ENCODE measurements at regions of chr10 and their contacts with region 1.

Region 1: GRCh38 chr10:3776796-3777571 is 8.0 kb downstream of the KLF6 start:
- DNase-seq: peak; percentile 69
- H3K4me3 Mint-ChIP-seq: peak overlapping the region; percentile 65
- H3K27ac Mint-ChIP-seq: peak overlapping the region; percentile 99
- H3K4me1 Mint-ChIP-seq: peaks cover 47% of the 10 kb centered on the region
- H3K27me3 Mint-ChIP-seq: no peaks in the 10 kb centered on the region
- CTCF ChIP-seq: no peak

Region 2: DNA sequence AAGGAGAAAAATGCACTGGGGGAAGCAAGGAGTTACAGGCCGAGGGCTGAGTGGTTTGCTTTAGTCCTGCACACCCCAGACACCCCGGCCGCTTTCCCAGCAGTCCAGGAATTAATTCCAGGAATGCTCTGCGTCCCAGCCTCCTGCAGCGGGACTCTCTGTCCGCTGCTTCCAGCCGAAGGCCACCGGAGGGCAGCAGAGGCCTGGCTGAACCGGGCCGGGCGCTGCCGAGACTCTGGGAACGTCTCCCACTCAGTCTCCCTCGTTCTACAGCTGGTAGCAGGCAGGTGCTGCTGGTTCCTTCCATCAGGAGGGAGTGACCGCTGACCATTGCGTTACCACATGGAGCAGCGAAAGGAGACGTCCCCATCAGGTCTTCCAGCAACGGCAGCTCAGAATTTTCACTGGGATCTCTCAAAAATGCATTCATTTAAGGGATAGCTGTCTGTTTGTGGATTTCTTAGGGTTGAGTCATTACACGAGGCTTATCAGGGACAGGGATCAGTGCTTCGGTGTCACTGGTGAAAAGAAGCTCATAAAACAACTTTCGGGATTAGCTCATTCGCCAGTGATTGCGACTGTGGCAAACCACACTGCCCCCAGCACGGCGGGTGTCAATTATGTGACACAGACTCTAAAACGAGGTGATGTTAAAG is 579.5 kb before region 1 on chr10:
- CTCF ChIA-PET with region 1: no interaction called
- intact Hi-C with region 1: loop called (anchors 5 kb)
- DNase-seq: peak; percentile 87
- H3K4me3 Mint-ChIP-seq: peak overlapping the region; percentile 68
- H3K27ac Mint-ChIP-seq: peak overlapping the region; percentile 49
- H3K4me1 Mint-ChIP-seq: peaks cover 17% of the 10 kb centered on the region
- H3K27me3 Mint-ChIP-seq: peaks cover 24% of the 10 kb centered on the region
- CTCF ChIP-seq: peak; percentile 85

Region 3: GRCh38 chr10:3239066-3239919 is 537.7 kb before region 1 on chr10:
- CTCF ChIA-PET with region 1: no interaction called
- intact Hi-C with region 1: loop called (anchors 5 kb)
- DNase-seq: peak; percentile 85
- H3K4me3 Mint-ChIP-seq: no peak overlapping the region
- H3K27ac Mint-ChIP-seq: no peak overlapping the region
- H3K4me1 Mint-ChIP-seq: peaks cover 9% of the 10 kb centered on the region
- H3K27me3 Mint-ChIP-seq: no peaks in the 10 kb centered on the region
- CTCF ChIP-seq: peak; percentile 73

Region 4: DNA sequence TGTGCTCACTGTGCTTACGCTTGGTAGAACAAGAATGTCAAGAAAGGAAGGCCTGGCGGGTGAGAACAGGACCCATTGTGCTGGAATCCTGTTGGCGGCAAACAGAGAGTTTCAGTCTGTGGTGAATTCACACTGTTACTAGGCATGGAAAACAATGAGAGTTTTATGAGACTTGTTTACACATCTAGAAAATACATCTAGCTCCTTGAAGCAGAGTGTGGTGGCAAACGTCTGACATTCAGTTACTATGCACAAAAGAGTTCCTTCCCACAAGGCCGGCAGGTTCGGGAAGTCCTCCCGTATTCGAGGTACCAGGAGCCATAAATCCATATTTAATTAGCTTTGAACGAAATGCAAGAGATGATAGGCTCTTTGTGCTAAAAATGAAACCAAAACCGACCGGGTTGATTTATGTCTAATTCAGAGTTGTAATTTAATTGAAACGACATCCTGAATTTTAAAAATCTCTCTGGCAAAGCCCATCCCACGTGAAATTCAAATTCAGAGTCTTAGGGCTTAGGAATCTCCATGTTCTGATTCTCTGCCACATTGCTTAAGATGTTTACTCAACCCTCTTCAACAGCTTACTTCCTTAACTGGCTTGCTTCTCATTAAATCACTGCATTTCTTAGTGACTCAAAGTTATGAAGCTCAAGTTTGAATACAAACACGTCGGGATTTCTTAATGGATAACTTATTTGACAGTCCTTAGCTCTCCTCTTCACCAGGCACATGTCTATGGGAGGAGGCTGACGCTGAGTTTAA is 304.5 kb before region 1 on chr10:
- CTCF ChIA-PET with region 1: interaction called, 5 read pairs
- intact Hi-C with region 1: loop called (anchors 2 kb)
- DNase-seq: peak; percentile 60
- H3K4me3 Mint-ChIP-seq: peak overlapping the region; percentile 44
- H3K27ac Mint-ChIP-seq: peak overlapping the region; percentile 94
- H3K4me1 Mint-ChIP-seq: peaks cover 83% of the 10 kb centered on the region
- H3K27me3 Mint-ChIP-seq: no peaks in the 10 kb centered on the region
- CTCF ChIP-seq: no peak

Region 5: GRCh38 chr10:3636356-3637181 is 140.4 kb before region 1 on chr10:
- CTCF ChIA-PET with region 1: no interaction called
- intact Hi-C with region 1: loop called (anchors 5 kb)
- DNase-seq: peak; percentile 10
- H3K4me3 Mint-ChIP-seq: peak overlapping the region; percentile 59
- H3K27ac Mint-ChIP-seq: peak overlapping the region; percentile 89
- H3K4me1 Mint-ChIP-seq: peaks cover 54% of the 10 kb centered on the region
- H3K27me3 Mint-ChIP-seq: no peaks in the 10 kb centered on the region
- CTCF ChIP-seq: no peak

Measured in Calu3 (cell line).